ENCODE measurements at regions of chr1 and their contacts with region 1.

Region 1: GRCh38 chr1:3283849-3284248 is 170.6 kb upstream of the ARHGEF16 start:
- DNase-seq: peak; percentile 28
- H3K4me3 ChIP-seq: no peak overlapping the region
- H3K27ac ChIP-seq: no peak overlapping the region
- H3K4me1 ChIP-seq: no peaks in the 10 kb centered on the region
- H3K27me3 ChIP-seq: no peaks in the 10 kb centered on the region
- CTCF ChIP-seq: peak; percentile 50

Region 2: DNA sequence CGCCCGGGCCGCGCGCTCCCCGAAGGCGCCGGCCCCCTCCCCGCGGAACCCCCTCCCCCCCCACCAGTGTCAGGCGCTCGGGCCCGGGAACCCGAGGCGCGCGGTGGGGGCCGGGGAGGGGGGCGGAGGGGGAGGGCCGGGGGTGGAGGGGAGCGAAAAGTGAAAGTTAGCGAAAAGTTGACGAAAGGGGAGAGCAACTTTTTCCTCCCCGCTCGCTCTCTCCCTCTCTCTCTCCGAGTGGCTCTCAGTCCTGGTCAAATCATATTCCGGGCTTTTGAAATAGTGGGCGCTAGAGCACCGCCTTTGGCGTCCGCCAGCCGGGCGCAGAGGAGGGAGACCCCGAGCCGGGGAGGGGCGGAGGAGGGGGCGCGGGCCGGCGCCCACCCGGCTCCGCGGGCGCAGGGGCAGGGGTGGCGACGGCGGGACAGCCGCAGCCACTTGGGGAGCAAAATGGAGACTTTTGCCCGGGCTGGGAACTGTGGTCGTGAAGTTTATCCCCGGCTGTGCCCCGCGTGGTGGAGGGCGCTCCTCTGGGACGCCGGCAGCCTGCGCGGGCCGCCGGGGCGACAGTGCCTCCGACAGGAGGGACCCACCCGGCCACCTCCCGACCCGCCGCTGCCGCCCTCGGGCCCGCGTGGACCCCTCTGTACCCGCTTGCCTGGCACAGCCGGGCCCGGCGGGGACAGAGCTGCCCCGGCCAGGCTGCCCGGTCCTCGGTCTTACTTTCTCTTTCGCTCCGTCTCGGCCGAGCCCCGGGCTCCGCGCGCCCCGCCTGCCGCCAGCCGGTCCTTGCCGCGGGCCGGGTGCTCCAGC is 214.2 kb before region 1 on chr1:
- intact Hi-C with region 1: loop called (anchors 10 kb)
- DNase-seq: peak; percentile 36
- H3K4me3 ChIP-seq: peak overlapping the region; percentile 77
- H3K27ac ChIP-seq: no peak overlapping the region
- H3K4me1 ChIP-seq: no peaks in the 10 kb centered on the region
- H3K27me3 ChIP-seq: peaks cover 79% of the 10 kb centered on the region
- CTCF ChIP-seq: no peak

Region 3: GRCh38 chr1:3133686-3134085 is 150.2 kb before region 1 on chr1:
- intact Hi-C with region 1: no loop called
- DNase-seq: peak; percentile 29
- H3K4me3 ChIP-seq: no peak overlapping the region
- H3K27ac ChIP-seq: no peak overlapping the region
- H3K4me1 ChIP-seq: no peaks in the 10 kb centered on the region
- H3K27me3 ChIP-seq: no peaks in the 10 kb centered on the region
- CTCF ChIP-seq: no peak

Region 4: DNA sequence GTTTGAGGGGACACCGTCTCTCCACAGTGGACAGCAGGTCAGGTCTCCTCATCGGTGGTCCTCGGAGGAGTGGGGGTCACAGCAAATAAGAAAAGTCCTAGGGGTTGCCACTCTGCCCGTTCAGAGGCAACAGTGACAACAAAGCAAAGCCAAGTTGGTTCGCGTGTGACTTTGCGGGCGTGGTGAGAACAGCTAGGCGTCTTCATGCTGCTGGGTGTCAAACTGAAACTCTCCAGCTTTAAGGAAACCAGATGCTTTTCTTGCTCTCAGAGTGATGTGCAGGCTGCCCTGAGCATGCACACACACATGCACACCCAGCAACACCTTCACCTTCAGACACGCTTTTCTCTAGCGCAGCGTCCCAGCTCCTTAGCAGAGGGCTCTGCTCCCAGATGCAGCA is 100.6 kb after region 1 on chr1:
- intact Hi-C with region 1: no loop called
- DNase-seq: no peak
- H3K4me3 ChIP-seq: no peak overlapping the region
- H3K27ac ChIP-seq: no peak overlapping the region
- H3K4me1 ChIP-seq: no peaks in the 10 kb centered on the region
- H3K27me3 ChIP-seq: no peaks in the 10 kb centered on the region
- CTCF ChIP-seq: no peak

Region 5: GRCh38 chr1:3403388-3404231 is 119.8 kb after region 1 on chr1:
- intact Hi-C with region 1: loop called (anchors 10 kb)
- DNase-seq: no peak
- H3K4me3 ChIP-seq: no peak overlapping the region
- H3K27ac ChIP-seq: no peak overlapping the region
- H3K4me1 ChIP-seq: no peaks in the 10 kb centered on the region
- H3K27me3 ChIP-seq: no peaks in the 10 kb centered on the region
- CTCF ChIP-seq: no peak

Region 6: GRCh38 chr1:3471302-3472087 is 187.6 kb after region 1 on chr1:
- intact Hi-C with region 1: no loop called
- DNase-seq: no peak
- H3K4me3 ChIP-seq: no peak overlapping the region
- H3K27ac ChIP-seq: no peak overlapping the region
- H3K4me1 ChIP-seq: no peaks in the 10 kb centered on the region
- H3K27me3 ChIP-seq: no peaks in the 10 kb centered on the region
- CTCF ChIP-seq: no peak

Region 7: DNA sequence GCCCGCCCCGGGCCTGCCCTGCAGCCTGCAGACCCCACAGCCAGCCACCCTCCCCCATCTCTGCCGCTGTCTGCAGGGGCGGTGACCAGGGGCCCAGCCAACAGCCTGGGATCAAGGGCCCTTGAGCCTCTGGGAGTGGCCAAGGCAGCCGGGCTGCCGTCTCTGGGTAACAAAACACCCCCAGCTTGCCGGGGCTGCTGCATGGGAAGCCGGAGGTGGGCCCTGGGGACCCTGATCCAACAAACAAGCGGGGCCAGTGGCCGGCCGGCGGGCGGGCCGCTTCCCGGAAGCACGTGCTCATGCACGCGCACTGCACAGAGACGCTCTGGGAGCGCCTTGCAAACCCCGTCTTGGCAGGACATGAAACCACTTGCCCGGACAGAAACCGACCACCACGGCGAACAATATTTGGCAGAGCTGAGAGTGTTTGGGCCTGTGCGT is 314.2 kb after region 1 on chr1:
- intact Hi-C with region 1: no loop called
- DNase-seq: no peak
- H3K4me3 ChIP-seq: no peak overlapping the region
- H3K27ac ChIP-seq: no peak overlapping the region
- H3K4me1 ChIP-seq: no peaks in the 10 kb centered on the region
- H3K27me3 ChIP-seq: no peaks in the 10 kb centered on the region
- CTCF ChIP-seq: no peak

Measured in colonic mucosa (tissue), 4 donors.